Activated CD8-positive, alpha-beta T cell treated with anti-CD3 and anti-CD28 coated beads for 36 hours (primary cell): ENCODE measurements at regions of chr11 and their contacts with region 1.

Region 1: GRCh38 chr11:16935518-16936302 is 78.5 kb downstream of the PLEKHA7 start:
- DNase-seq: peak; percentile 57
- ATAC-seq: peak; percentile 80
- H3K4me3 Mint-ChIP-seq: no peak overlapping the region
- H3K27ac Mint-ChIP-seq: no peak overlapping the region
- H3K4me1 Mint-ChIP-seq: no peaks in the 10 kb centered on the region
- H3K27me3 Mint-ChIP-seq: peaks cover 16% of the 10 kb centered on the region
- CTCF ChIP-seq: peak; percentile 65

Region 2: DNA sequence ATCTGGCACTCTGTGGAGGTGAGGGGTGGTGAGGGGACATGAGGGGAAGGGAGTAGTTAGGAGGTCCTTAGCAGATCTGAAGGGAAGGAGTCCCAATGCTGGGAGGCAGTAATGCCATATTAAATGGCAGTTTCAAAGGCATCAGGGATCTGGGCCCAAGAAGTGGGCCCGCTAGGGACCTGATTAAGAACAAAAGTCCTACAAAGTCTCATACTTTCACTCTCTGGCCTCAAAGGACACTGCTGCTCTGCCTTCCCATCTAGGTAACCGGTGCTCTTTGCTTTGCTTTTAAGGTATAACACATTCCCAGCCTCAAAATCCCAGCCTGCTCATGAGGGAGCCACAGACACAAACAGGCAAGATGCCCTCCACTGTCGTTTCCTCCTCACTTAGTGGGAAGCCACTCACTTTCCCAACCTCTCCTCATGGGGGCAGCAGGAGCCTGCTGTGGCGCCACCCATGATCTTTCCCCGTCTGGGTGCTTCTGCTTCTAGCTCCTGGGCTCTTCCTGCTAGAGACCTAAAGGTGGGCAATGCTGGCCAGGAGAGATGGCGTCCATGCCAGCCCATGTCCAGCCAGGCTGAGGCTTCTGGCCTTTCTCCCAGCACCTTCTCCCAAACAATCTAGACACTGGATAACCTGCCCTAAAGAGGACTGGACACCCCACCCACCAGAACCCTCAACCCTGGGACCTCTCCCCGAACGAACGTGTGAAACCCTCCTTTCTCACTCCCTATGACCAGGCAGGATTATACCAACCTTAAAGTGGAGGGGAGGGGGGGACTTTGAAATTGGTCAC is 10.2 kb after region 1 on chr11:
- CTCF ChIA-PET with region 1: interaction called, 10 read pairs
- POLR2A ChIA-PET with region 1: no interaction called
- intact Hi-C with region 1: no loop called
- DNase-seq: peak; percentile 72
- ATAC-seq: peak; percentile 90
- H3K4me3 Mint-ChIP-seq: no peak overlapping the region
- H3K27ac Mint-ChIP-seq: no peak overlapping the region
- H3K4me1 Mint-ChIP-seq: peaks cover 6% of the 10 kb centered on the region
- H3K27me3 Mint-ChIP-seq: peaks cover 2% of the 10 kb centered on the region
- CTCF ChIP-seq: peak; percentile 60